ENCODE measurements at regions of chrX and their contacts with region 1.

Region 1: DNA sequence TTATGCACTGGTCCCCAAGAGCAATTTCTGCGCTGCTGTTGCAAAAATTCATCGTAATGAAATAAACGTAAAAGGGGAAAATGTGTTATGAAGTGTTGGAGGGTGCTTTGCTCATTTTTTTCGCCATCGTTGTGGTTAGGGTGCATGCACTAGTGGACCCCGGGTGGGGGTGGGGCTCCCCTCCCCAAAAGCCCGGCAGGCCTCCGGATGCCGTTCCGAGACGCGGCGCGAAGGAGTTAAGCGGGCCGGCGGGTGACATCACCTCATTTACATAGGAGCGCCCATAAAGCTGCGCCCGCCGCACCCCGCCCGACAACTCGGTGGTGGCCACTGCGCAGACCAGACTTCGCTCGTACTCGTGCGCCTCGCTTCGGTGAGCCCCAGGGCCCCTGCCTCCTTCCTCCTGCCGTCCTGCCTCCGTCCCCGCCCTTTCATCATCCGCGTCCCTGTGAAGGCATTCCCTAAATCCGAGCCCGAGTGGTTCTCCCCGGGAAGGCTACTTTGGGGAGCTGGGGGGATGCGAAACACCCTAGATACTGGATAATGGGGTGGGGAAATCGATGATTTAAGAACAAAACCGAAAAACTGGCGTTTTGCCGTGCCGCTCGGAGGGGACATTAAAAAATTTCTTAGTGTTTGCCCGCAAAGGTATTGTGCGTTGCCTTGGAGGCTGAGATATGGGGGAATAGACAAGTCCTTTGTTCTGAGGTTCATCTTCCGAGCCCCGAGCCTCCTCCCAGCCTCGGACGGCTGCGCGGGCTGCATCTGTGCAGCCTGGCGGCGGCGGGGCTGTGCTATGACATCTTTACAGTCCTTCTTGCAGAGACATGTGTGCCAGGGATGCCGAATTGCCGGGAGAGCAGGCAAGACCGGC is at the start of gene TMSB4X:
- DNase-seq: peak; percentile 71 to 85
- H3K4me3 ChIP-seq: peak within 1 kb of the TSS; percentile 99
- H3K27ac ChIP-seq: peak within 1 kb of the TSS; percentile 99
- H3K4me1 ChIP-seq: peaks cover 36% of the 10 kb centered on the region
- H3K27me3 ChIP-seq: no peaks in the 10 kb centered on the region
- CTCF ChIP-seq: no peak
- total RNA-seq, gene TMSB4X: 2,589 and 3,588 TPM in 2 replicates

Region 2: DNA sequence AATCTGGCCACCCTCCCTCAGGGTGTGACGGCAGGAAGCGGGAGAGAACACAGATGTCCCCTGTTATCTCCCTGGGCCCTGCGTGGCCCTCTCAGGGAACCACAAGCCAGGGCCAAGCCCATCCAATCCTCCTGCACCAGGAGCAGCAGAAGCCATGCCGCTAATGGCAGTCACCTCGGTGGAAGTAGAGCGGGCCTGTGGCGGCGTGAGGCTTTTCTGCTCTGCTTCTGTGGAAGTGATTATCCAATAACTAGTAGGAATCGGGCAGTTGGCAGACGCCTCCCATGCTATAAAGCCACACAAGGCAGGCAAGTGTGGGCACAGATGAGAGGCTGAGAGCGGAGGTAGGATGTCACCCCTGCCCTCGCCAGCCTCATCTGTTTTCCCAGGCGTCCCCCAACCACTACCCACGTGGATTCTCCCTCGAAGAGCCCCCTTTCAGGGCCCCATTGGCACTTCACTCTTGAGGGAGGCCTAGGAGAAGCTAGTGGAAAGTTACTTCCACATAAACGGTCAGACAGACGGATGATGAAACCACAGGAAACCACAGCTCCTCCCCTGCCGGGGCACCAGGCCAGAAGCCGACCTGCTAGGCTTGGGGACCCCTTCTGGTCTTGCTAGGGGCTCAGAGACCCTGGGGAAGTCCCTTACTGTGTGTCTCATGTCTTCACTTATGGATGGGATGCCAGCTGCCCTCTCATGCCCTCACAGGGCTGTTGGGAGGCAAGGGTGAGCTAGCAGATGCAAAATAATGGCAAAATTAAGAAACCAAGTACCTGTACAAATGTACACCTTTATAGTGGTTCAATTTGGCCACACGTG is 18.9 kb before region 1 on chrX:
- CTCF ChIA-PET with region 1: interaction called, 3 read pairs
- POLR2A ChIA-PET with region 1: interaction called, 9 read pairs
- intact Hi-C with region 1: loop called (anchors 1 kb)
- DNase-seq: peak; percentile 37 to 54
- H3K4me3 ChIP-seq: peak overlapping the region; percentile 38; the same call in 1 of the 2 replicates
- H3K27ac ChIP-seq: peak overlapping the region; percentile 99
- H3K4me1 ChIP-seq: peaks cover 29% of the 10 kb centered on the region
- H3K27me3 ChIP-seq: no peaks in the 10 kb centered on the region
- CTCF ChIP-seq: no peak

Region 3: DNA sequence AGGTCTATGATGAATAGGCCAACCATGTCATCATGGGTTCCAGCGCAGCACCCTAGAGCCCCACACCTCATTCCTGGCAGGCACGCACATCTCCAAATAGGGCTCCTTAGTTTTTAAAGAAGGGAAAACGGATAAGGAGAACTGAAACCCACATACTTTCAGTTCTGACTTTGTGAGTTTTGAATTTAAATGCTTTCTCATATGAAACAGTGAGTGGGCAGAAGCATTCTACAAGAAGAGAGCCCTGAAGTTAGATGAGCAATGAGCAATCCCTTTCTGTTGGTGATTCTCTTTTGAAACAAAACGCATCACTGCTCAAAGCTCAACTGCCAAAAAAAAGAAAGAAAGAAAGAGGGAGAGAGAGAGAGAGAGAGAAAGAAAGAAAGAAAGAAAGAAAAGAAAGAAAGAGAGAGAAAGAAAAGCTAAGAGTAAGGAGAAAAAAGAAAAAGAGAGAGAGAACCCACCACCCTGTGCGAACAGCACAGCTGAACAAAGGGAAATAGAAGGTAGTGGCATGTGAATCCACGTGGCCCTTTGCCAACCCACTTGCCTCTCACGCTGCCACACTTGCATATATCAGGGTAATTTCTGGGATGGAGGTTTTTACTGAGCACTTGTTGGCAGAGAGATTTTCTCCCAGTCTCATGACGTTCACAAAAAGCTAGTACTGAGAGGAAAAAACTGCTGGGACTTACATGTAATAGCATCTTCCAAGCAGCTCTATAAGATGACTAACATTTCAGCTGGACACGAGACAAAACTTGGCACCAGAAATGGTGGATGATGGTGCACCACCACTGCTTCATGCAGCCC is 30.8 kb after region 1 on chrX:
- CTCF ChIA-PET with region 1: interaction called, 16 read pairs
- POLR2A ChIA-PET with region 1: interaction called, 5 read pairs
- intact Hi-C with region 1: loop called (anchors 2 kb)
- DNase-seq: no peak
- H3K4me3 ChIP-seq: no peak overlapping the region
- H3K27ac ChIP-seq: no peak overlapping the region
- H3K4me1 ChIP-seq: peaks cover 75% of the 10 kb centered on the region
- H3K27me3 ChIP-seq: no peaks in the 10 kb centered on the region
- CTCF ChIP-seq: no peak

Region 4: GRCh38 chrX:13101441-13102139 is 126.6 kb after region 1 on chrX:
- CTCF ChIA-PET with region 1: no interaction called
- POLR2A ChIA-PET with region 1: interaction called, 19 read pairs
- intact Hi-C with region 1: loop called (anchors 2 kb)
- DNase-seq: peak; percentile 72 to 93
- H3K4me3 ChIP-seq: no peak overlapping the region; the same call in 1 of the 2 replicates
- H3K27ac ChIP-seq: peak overlapping the region; percentile 96
- H3K4me1 ChIP-seq: peaks cover 48% of the 10 kb centered on the region
- H3K27me3 ChIP-seq: no peaks in the 10 kb centered on the region
- CTCF ChIP-seq: no peak

Region 5: GRCh38 chrX:13194291-13195103 is 219.5 kb after region 1 on chrX:
- CTCF ChIA-PET with region 1: no interaction called
- POLR2A ChIA-PET with region 1: no interaction called
- intact Hi-C with region 1: loop called (anchors 5 kb)
- DNase-seq: peak in 1 of 2 experiments; percentile 90
- H3K4me3 ChIP-seq: peak overlapping the region; percentile 8; the same call in 1 of the 2 replicates
- H3K27ac ChIP-seq: peak overlapping the region; percentile 93
- H3K4me1 ChIP-seq: peaks cover 74% of the 10 kb centered on the region
- H3K27me3 ChIP-seq: no peaks in the 10 kb centered on the region
- CTCF ChIP-seq: no peak

Region 6: GRCh38 chrX:13688958-13689740 is 714.1 kb after region 1 on chrX and contains the start of gene RAB9A:
- CTCF ChIA-PET with region 1: no interaction called
- POLR2A ChIA-PET with region 1: interaction called, 27 read pairs
- intact Hi-C with region 1: no loop called
- DNase-seq: peak; percentile 54 to 88
- H3K4me3 ChIP-seq: peak within 1 kb of the TSS; percentile 63
- H3K27ac ChIP-seq: peak within 1 kb of the TSS; percentile 82
- H3K4me1 ChIP-seq: peaks cover 54% of the 10 kb centered on the region
- H3K27me3 ChIP-seq: no peaks in the 10 kb centered on the region
- CTCF ChIP-seq: no peak
- total RNA-seq, gene RAB9A: 26.7 and 30.7 TPM in 2 replicates

Measured in PC-9 (cell line).